Caco-2 (cell line): ENCODE measurements at regions of chr6 and their contacts with region 1.

Region 1: DNA sequence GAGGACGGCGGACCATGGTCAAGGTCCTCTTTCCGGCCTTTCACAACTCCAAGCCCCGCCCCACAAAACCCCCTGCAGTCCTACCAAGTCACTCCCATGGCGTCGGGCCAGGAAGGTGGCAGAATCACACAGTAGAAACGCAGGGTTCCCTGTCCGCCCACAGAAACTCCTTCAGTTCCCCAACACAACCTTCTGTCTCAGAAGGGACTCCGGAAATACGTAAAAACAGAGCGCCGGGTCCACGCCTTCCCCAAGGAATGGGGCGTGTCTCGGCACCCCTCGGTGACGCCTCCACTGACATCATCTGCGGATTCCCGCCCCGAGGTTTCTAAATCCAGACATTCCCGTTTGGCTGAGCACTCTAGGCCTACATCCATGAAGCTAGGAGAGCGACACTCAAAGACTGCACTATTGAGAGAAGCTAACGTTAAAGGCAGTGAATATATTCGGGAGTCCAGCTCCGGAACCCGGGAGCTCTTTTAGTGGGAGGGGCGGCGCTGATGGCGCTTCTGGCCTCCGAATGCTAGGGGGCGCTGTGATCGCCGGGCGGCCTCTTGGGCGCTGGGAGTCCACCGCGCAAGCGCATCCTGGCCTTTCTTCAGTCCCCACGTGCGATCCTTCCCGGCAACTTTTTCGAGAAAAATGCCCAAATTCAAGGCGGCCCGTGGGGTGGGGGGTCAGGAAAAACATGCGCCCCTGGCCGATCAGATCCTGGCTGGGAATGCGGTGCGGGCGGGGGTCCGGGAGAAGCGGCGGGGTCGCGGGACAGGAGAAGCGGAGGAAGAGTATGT is at the starts of genes BYSL and MED20:
- DNase-seq: peak; percentile 92
- H3K4me3 ChIP-seq: peak within 1 kb of the TSS; percentile 98
- H3K4me3 Mint-ChIP-seq: peak within 1 kb of the TSS; percentile 88
- H3K27ac Mint-ChIP-seq: peak within 1 kb of the TSS; percentile 98
- H3K4me1 ChIP-seq: peaks cover 9% of the 10 kb centered on the region; the same call in 1 of the 2 replicates
- H3K4me1 Mint-ChIP-seq: peaks cover 19% of the 10 kb centered on the region
- H3K27me3 ChIP-seq: no peaks in the 10 kb centered on the region
- H3K27me3 Mint-ChIP-seq: no peaks in the 10 kb centered on the region
- CTCF ChIP-seq: peak; percentile 94 to 95
- total RNA-seq, gene BYSL: 42.6 and 45.9 TPM in 2 replicates
- total RNA-seq, gene MED20: 40.0 and 43.7 TPM in 2 replicates

Region 2: DNA sequence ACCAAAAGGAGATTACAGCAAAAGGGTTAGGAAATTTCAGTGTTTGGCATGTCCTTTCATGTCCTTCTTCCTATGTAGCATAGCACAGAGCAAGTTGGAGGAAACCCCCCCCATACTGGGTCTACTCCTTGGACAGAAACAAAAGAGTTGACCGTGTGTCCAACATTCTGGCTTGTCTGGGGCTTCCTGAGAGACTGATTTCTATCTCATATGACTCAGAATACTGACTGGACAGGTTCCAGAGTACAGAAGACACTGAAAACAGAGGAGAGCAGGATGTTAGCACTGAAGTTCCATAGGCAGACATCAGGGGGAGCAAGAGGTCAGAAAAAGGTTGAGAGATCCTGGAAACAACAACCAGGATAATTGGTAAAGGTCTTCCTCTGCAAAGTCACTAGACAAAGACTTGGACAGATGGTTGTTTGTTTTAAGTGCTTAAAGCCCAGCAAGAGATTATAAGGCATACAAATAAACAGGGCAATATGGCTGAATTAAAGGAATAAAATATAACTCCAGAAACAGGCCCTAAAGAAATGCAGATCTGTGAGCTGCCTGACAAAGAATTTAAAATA is 74.4 kb before region 1 on chr6:
- CTCF ChIA-PET with region 1: interaction called, 4 read pairs
- POLR2A ChIA-PET with region 1: no interaction called
- intact Hi-C with region 1: loop called (anchors 5 kb)
- DNase-seq: peak; percentile 65 to 83
- H3K4me3 ChIP-seq: no peak overlapping the region
- H3K4me3 Mint-ChIP-seq: no peak overlapping the region
- H3K27ac Mint-ChIP-seq: no peak overlapping the region
- H3K4me1 ChIP-seq: peaks cover 5% of the 10 kb centered on the region; the same call in 1 of the 2 replicates
- H3K4me1 Mint-ChIP-seq: peaks cover 12% of the 10 kb centered on the region
- H3K27me3 ChIP-seq: no peaks in the 10 kb centered on the region
- H3K27me3 Mint-ChIP-seq: no peaks in the 10 kb centered on the region
- CTCF ChIP-seq: peak; percentile 81 to 86

Region 3: GRCh38 chr6:41901882-41902519 is 19.1 kb before region 1 on chr6:
- CTCF ChIA-PET with region 1: interaction called, 20 read pairs
- POLR2A ChIA-PET with region 1: interaction called, 26 read pairs
- intact Hi-C with region 1: loop called (anchors 1 kb)
- DNase-seq: peak in 1 of 2 experiments; percentile 35
- H3K4me3 ChIP-seq: no peak overlapping the region
- H3K4me3 Mint-ChIP-seq: no peak overlapping the region
- H3K27ac Mint-ChIP-seq: no peak overlapping the region
- H3K4me1 ChIP-seq: peaks cover 24% of the 10 kb centered on the region
- H3K4me1 Mint-ChIP-seq: peaks cover 27% of the 10 kb centered on the region
- H3K27me3 ChIP-seq: no peaks in the 10 kb centered on the region
- H3K27me3 Mint-ChIP-seq: no peaks in the 10 kb centered on the region
- CTCF ChIP-seq: no peak

Region 4: GRCh38 chr6:41941280-41942066 is 20.4 kb after region 1 on chr6 and contains the start of gene CCND3:
- CTCF ChIA-PET with region 1: interaction called, 12 read pairs
- POLR2A ChIA-PET with region 1: interaction called, 9 read pairs
- intact Hi-C with region 1: loop called (anchors 2 kb)
- DNase-seq: peak; percentile 90 to 93
- H3K4me3 ChIP-seq: peak within 1 kb of the TSS; percentile 94
- H3K4me3 Mint-ChIP-seq: peak within 1 kb of the TSS; percentile 80
- H3K27ac Mint-ChIP-seq: peak within 1 kb of the TSS; percentile 86
- H3K4me1 ChIP-seq: peaks cover 17% of the 10 kb centered on the region
- H3K4me1 Mint-ChIP-seq: peaks cover 17% of the 10 kb centered on the region
- H3K27me3 ChIP-seq: no peaks in the 10 kb centered on the region
- H3K27me3 Mint-ChIP-seq: no peaks in the 10 kb centered on the region
- CTCF ChIP-seq: no peak
- total RNA-seq, gene CCND3: 24.7 and 26.9 TPM in 2 replicates

Region 5: DNA sequence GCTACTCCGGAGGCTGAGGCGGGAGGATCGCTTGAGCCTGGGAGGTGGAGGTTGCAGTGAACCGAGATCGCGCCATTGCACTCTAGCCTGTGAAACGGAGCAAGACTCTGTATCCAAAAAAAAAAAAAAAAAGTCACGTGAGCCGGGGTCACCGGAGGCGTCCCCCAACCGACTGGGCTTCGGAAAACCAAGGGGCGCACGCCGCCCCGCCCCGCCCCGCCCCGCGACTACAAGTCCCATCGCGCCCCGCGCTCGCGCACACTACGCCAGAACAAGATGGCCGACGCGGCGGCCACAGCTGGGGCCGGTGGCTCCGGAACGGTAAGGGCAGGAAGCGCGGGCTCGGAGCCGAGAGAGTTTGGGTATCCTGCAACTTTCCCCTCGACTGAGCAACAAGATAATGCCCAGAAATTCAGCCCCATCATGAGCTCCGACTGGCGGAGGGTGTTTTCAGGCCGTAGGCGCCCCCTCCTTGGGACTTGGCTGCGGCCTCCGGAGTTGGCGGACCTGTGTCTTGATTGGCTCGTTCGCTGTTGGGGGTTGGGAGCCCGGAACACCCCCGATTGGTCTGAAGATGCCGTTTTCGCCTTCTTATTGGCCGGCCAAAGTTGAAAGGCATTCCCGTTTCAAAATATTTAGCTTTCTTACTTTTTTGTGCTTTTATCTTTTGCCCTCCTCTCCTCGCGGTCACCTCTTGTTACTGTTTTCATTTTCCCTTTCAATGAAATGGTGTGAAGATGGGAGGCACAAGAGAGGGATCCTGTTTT is 129.3 kb after region 1 on chr6 and contains the start of gene TAF8:
- CTCF ChIA-PET with region 1: interaction called, 7 read pairs
- POLR2A ChIA-PET with region 1: interaction called, 4 read pairs
- intact Hi-C with region 1: loop called (anchors 1 kb)
- DNase-seq: peak; percentile 92 to 93
- H3K4me3 ChIP-seq: peak within 1 kb of the TSS; percentile 71
- H3K4me3 Mint-ChIP-seq: peak within 1 kb of the TSS; percentile 95
- H3K27ac Mint-ChIP-seq: peak within 1 kb of the TSS; percentile 98
- H3K4me1 ChIP-seq: peaks cover 14% of the 10 kb centered on the region; the same call in 1 of the 2 replicates
- H3K4me1 Mint-ChIP-seq: no peaks in the 10 kb centered on the region
- H3K27me3 ChIP-seq: no peaks in the 10 kb centered on the region
- H3K27me3 Mint-ChIP-seq: no peaks in the 10 kb centered on the region
- CTCF ChIP-seq: no peak
- total RNA-seq, gene TAF8: 35.0 and 37.7 TPM in 2 replicates

Region 6: GRCh38 chr6:42260972-42261371 is 339.9 kb after region 1 on chr6:
- CTCF ChIA-PET with region 1: no interaction called
- POLR2A ChIA-PET with region 1: no interaction called
- intact Hi-C with region 1: no loop called
- DNase-seq: peak in 1 of 2 experiments; percentile 38
- H3K4me3 ChIP-seq: no peak overlapping the region
- H3K4me3 Mint-ChIP-seq: no peak overlapping the region
- H3K27ac Mint-ChIP-seq: no peak overlapping the region
- H3K4me1 ChIP-seq: peaks cover 3% of the 10 kb centered on the region; the same call in 1 of the 2 replicates
- H3K4me1 Mint-ChIP-seq: no peaks in the 10 kb centered on the region
- H3K27me3 ChIP-seq: no peaks in the 10 kb centered on the region; the same call in 1 of the 2 replicates
- H3K27me3 Mint-ChIP-seq: no peaks in the 10 kb centered on the region
- CTCF ChIP-seq: peak; percentile 32 to 39